Motor neuron (in vitro differentiated cells): ENCODE measurements at regions of chrX and their contacts with region 1.

Region 1: DNA sequence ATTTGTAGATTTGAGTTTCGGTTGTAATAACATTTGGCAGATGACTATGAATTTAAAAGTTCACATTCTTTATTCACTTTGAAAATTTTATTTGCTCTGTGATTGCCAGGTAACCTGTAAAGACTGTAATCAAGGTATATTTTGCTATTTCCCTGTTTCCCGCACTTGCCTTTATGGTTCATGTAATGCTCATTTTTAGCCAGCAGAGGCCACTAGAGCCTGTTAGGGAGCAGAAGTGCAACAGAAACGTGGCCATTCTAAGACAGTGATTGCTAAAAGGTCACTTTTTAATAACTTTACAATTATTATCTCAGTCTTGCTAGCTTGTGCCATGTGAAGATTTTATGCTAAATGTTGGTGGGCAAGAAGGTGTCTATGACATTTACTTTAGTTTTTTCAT is 12.4 kb downstream of the YIPF6 start:
- ATAC-seq: peak in 1 of 8 experiments; percentile 25
- H3K4me3 ChIP-seq: no peak overlapping the region
- H3K27ac ChIP-seq: no peak overlapping the region
- H3K4me1 ChIP-seq: no peaks in the 10 kb centered on the region

Region 2: DNA sequence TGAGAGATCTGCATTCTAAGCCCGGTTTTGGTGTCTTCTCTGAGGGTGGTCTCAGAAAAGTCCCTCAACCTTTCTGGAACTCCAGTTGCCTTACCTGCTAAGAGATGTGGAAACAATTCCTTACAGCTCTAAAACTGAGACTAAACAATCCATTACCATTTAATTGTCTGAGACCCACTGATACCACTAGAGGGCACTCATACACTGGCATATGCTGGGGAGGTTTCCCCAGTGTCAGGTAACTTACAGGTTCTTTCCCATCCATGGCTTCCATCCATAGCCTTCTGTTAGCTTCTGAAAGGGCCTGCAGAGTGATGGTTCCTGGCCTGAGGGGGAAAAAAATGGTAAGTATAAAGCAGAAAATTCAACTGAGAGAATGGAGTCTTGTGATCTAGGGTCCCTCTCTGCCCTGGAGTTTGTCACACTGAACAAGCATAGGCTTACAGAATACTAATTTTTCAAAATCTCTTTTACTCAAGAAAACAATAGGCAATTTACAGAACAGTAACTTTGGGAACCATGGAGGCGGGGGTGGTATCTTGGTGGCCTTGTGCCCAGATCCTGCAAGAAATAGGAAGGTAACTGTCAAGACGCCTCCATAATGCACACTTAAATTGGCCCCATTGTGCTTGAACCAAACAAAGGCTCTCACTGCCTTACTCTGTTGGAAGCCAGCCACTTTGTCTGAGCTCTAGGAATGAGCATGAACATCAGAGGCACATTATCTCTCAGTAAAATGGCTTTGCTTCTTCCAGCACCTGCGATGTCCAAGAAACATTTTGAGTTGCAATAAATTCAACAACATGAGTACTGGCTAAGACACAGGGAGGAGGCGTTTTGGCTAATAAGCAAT is 314.1 kb before region 1 on chrX:
- in situ Hi-C with region 1: no loop called
- ATAC-seq: peak in 7 of 8 experiments; percentile 46 to 76 (median 54)
- H3K4me3 ChIP-seq: no peak overlapping the region
- H3K27ac ChIP-seq: no peak overlapping the region
- H3K4me1 ChIP-seq: no peaks in the 10 kb centered on the region

Region 3: GRCh38 chrX:68710870-68711576 is 199.8 kb after region 1 on chrX:
- in situ Hi-C with region 1: loop called in 3 of 9 experiments (anchors 25 kb)
- ATAC-seq: peak; percentile 36 to 90 (median 62)
- H3K4me3 ChIP-seq: no peak overlapping the region
- H3K27ac ChIP-seq: no peak overlapping the region
- H3K4me1 ChIP-seq: no peaks in the 10 kb centered on the region

Region 4: GRCh38 chrX:68822641-68823410 is 311.6 kb after region 1 on chrX:
- in situ Hi-C with region 1: loop called in 1 of 9 experiments (anchors 25 kb)
- ATAC-seq: peak; percentile 87 to 95 (median 90)
- H3K4me3 ChIP-seq: no peak overlapping the region
- H3K27ac ChIP-seq: peak overlapping the region in 1 of 2 donors; percentile 59
- H3K4me1 ChIP-seq: peaks cover 14 to 18% of the 10 kb centered on the region in 2 donors